Calu3 (cell line): ENCODE measurements at regions of chr3 and their contacts with region 1.

Region 1: DNA sequence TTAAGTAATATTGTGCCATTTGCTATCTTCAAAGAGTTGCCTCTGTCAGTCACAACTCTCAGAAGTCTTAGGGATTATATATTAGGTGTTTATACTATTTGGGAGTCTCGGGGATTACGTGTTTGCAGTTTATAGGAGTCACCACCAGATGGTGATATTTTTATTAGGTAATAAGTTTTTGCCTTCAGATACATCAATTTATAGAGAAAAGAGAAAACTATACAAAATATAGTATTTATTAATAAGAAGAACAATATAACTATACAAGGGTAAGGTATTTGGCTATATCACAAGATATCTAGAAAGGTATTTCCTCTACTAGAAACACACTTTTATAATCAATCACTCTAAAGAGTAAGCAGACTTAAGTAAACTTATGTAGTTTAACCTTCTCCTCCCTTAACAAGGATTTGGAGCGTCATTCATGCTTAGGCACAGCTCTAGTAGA is 10.7 kb upstream of the DHX36 start:
- DNase-seq: peak; percentile 30
- H3K4me3 Mint-ChIP-seq: no peak overlapping the region
- H3K27ac Mint-ChIP-seq: no peak overlapping the region
- H3K4me1 Mint-ChIP-seq: peaks cover 8% of the 10 kb centered on the region
- H3K27me3 Mint-ChIP-seq: peaks cover 7% of the 10 kb centered on the region
- CTCF ChIP-seq: peak; percentile 68

Region 2: GRCh38 chr3:154209513-154210481 is 125.2 kb before region 1 on chr3:
- CTCF ChIA-PET with region 1: no interaction called
- intact Hi-C with region 1: no loop called
- DNase-seq: no peak
- H3K4me3 Mint-ChIP-seq: no peak overlapping the region
- H3K27ac Mint-ChIP-seq: no peak overlapping the region
- H3K4me1 Mint-ChIP-seq: no peaks in the 10 kb centered on the region
- H3K27me3 Mint-ChIP-seq: no peaks in the 10 kb centered on the region
- CTCF ChIP-seq: no peak

Region 3: DNA sequence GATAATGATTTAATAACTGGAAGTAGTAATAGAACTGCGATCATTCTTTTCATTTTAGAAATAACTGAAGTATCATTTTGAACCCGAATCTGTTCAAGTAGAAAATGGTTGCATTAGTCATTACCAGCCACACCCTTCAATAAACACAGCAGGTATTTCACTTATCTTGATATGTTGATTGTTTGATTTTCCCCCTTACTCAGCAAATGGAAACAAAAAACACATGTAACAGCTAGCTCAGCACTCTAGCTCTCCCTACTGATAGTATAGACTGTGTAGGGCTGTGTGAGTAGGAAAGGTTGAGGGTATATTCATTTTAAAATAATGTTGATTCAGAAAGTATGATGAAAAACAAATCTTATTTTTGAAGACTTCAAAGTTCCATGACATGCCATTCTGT is 96.0 kb after region 1 on chr3:
- CTCF ChIA-PET with region 1: no interaction called
- intact Hi-C with region 1: loop called (anchors 1 kb)
- DNase-seq: no peak
- H3K4me3 Mint-ChIP-seq: no peak overlapping the region
- H3K27ac Mint-ChIP-seq: no peak overlapping the region
- H3K4me1 Mint-ChIP-seq: peaks cover 35% of the 10 kb centered on the region
- H3K27me3 Mint-ChIP-seq: peaks cover 35% of the 10 kb centered on the region
- CTCF ChIP-seq: no peak

Region 4: DNA sequence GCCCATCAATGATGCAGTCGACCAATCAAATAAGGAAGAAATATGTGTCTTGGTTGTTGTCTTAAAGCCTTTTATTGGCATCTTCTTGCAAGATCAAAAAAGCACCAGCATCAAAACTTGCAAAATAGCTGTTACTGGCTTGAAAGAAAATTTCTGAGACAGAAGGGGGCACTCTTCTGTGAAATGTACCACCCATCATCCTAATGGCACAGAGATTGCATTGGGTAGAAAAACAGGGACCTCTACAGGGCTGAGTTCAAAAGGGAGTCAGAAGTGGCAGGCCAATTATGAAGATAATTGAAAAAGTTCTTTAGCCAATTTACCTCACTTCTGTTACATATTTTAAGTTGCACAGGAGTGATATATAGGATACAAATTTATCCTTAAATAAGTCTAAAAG is 217.3 kb after region 1 on chr3:
- CTCF ChIA-PET with region 1: no interaction called
- intact Hi-C with region 1: loop called (anchors 5 kb)
- DNase-seq: no peak
- H3K4me3 Mint-ChIP-seq: no peak overlapping the region
- H3K27ac Mint-ChIP-seq: no peak overlapping the region
- H3K4me1 Mint-ChIP-seq: no peaks in the 10 kb centered on the region
- H3K27me3 Mint-ChIP-seq: no peaks in the 10 kb centered on the region
- CTCF ChIP-seq: no peak

Region 5: DNA sequence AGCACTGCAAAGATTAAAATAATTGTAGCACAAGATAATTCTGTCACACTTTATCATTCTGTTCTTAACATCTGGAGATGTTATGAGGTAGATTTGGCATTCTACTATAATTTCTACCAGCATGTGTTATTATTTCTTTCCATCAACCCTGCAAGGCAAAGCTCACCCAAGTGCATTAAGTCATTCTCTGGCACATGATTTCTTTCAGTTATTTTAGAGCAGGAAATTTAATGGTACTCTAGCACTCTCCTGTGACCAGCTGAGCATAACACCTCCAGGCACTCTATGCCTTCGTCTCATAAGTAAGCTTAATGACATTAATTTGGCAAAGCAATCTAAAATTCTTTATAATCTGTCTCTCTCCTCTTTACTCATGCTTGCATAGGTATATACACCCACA is 395.2 kb after region 1 on chr3:
- CTCF ChIA-PET with region 1: no interaction called
- intact Hi-C with region 1: loop called (anchors 2 kb)
- DNase-seq: no peak
- H3K4me3 Mint-ChIP-seq: no peak overlapping the region
- H3K27ac Mint-ChIP-seq: no peak overlapping the region
- H3K4me1 Mint-ChIP-seq: no peaks in the 10 kb centered on the region
- H3K27me3 Mint-ChIP-seq: no peaks in the 10 kb centered on the region
- CTCF ChIP-seq: no peak

Region 6: GRCh38 chr3:154745960-154746359 is 411.0 kb after region 1 on chr3:
- CTCF ChIA-PET with region 1: no interaction called
- intact Hi-C with region 1: loop called (anchors 1 kb)
- DNase-seq: peak; percentile 32
- H3K4me3 Mint-ChIP-seq: no peak overlapping the region
- H3K27ac Mint-ChIP-seq: no peak overlapping the region
- H3K4me1 Mint-ChIP-seq: no peaks in the 10 kb centered on the region
- H3K27me3 Mint-ChIP-seq: no peaks in the 10 kb centered on the region
- CTCF ChIP-seq: no peak